Body of pancreas (tissue), 4 donors: ENCODE measurements at regions of chr6 and their contacts with region 1.

Region 1: DNA sequence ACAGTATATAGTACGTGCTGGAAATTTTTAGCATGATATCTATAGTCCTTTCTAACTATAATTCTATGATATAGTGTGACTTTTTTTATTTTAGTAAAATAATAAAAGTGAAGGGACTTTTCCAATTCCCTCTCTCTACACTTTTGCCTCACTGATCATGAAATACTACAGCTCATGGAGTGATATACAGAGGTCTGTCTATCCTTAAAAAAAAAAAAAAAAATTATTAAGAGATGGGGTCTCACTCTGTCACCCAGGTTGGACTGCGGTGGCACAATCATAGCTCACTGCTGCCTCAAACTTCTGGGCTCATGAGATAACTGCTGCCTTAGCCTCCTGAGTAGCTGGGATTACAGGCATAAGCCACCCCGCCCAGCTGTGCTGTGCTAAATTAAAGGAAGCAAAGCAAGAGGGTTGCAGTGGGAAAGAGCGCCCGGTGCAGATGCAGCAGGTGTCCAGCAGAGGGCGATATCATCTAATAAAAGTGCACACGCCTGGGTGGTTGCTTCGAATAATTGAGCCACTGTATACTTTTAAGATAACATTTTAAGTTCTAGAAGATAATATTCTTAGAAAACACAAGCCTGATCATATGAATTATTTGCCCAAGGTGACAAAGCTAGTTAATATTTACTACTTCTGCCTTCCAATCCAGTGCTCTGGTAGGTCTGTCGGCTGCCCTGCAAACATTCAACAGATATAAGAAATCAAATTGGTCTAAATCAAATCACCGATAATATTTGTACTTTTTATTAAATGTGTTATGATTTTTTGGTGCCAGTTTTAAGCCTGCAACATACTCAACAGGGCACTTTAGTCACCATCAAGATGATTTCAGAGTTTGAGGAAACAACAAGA is 94.9 kb upstream of the NT5E start:
- DNase-seq: peak; percentile 69 to 81 (median 76)
- ATAC-seq: peak; percentile 93
- H3K4me3 ChIP-seq: no peak overlapping the region
- H3K27ac ChIP-seq: no peak overlapping the region
- H3K4me1 ChIP-seq: peaks cover 6% of the 10 kb centered on the region
- H3K27me3 ChIP-seq: no peaks in the 10 kb centered on the region
- CTCF ChIP-seq: peak; percentile 85 to 98 (median 94)
- POLR2A ChIP-seq: no peak

Region 2: DNA sequence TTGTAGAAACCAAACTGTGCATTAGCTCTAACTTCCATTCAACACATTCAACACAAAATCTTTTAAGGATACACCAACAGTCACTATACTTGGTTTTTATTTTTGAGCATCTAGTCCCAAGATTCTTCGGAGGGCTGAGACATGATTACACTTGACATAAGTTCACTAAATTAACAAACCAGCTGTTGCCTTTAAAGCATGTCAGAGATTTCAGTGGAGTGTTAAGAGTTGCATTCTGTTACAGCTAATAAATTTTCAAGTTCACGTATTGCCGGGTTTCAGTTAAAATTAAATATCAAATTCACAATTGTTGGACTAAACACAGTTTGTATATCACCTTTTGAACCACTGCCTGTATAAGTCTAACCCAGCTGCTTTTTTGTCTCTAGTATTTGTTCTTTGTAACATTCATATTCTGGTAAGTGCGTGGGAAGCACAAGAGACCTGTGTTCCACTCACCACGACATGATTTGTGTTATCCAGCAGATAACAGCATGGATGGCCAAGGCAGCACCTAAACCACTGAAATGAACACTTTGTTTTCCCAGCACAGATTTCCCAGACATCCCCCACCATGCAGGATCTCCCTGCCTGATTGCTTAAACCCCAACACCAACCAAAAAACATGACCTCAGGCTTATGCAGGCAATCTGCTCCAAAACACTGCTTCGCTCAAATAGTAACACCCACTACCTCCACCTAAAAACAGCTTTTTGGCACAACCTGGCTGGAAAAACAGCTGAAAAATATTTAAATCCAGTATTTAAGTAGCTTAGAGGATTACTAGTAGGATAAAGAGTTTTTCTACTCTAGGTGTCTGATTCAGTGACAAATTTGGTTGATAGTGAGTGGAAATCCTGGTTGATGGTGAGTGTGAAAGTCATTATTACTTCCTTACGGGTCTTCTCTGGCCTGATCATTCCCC is 191.6 kb before region 1 on chr6:
- intact Hi-C with region 1: no loop called
- DNase-seq: no peak
- ATAC-seq: no peak
- H3K4me3 ChIP-seq: no peak overlapping the region
- H3K27ac ChIP-seq: no peak overlapping the region
- H3K4me1 ChIP-seq: no peaks in the 10 kb centered on the region
- H3K27me3 ChIP-seq: no peaks in the 10 kb centered on the region
- CTCF ChIP-seq: no peak
- POLR2A ChIP-seq: no peak

Region 3: GRCh38 chr6:85482905-85483700 is 128.1 kb after region 1 on chr6:
- intact Hi-C with region 1: loop called (anchors 5 kb)
- DNase-seq: peak; percentile 76 to 87 (median 82)
- ATAC-seq: peak; percentile 92
- H3K4me3 ChIP-seq: no peak overlapping the region
- H3K27ac ChIP-seq: no peak overlapping the region
- H3K4me1 ChIP-seq: peaks cover 5% of the 10 kb centered on the region
- H3K27me3 ChIP-seq: no peaks in the 10 kb centered on the region
- CTCF ChIP-seq: peak; percentile 94 to 100 (median 97)
- POLR2A ChIP-seq: no peak

Region 4: DNA sequence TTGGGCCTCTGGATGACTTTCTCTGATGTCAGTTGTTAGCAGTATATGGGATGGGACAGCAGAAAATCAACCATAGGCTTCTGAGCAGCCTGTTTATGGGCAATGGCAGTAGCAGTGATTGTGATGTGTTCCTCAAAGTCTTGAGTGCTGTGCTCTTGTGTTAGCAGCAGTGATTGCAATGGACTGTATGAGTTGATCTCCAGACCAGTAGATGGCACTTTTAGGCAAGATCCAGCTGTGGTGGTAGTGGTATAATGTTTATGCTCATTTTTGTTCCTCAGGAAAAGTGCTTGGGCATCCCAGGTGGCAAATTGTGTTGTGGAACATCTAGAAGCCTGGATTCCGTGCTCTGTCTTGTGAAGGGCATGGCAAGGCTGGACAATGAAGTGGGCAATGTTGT is 469.3 kb after region 1 on chr6:
- intact Hi-C with region 1: no loop called
- DNase-seq: no peak
- ATAC-seq: no peak
- H3K4me3 ChIP-seq: no peak overlapping the region
- H3K27ac ChIP-seq: no peak overlapping the region
- H3K4me1 ChIP-seq: no peaks in the 10 kb centered on the region
- H3K27me3 ChIP-seq: no peaks in the 10 kb centered on the region
- CTCF ChIP-seq: peak in 3 of 7 experiments; percentile 15 to 45 (median 19)
- POLR2A ChIP-seq: no peak